ENCODE measurements at regions of chr16 and their contacts with region 1.

Region 1: GRCh38 chr16:68093816-68094613 is 8.8 kb downstream of the NFATC3 start:
- DNase-seq: no peak
- ATAC-seq: peak; percentile 67
- H3K4me3 ChIP-seq: no peak overlapping the region
- H3K27ac ChIP-seq: no peak overlapping the region
- H3K4me1 ChIP-seq: peaks cover 92% of the 10 kb centered on the region
- H3K27me3 ChIP-seq: no peaks in the 10 kb centered on the region
- CTCF ChIP-seq: peak; percentile 76
- EP300 ChIP-seq: no peak
- POLR2A ChIP-seq: no peak
- RAD21 ChIP-seq: peak; percentile 51

Region 2: DNA sequence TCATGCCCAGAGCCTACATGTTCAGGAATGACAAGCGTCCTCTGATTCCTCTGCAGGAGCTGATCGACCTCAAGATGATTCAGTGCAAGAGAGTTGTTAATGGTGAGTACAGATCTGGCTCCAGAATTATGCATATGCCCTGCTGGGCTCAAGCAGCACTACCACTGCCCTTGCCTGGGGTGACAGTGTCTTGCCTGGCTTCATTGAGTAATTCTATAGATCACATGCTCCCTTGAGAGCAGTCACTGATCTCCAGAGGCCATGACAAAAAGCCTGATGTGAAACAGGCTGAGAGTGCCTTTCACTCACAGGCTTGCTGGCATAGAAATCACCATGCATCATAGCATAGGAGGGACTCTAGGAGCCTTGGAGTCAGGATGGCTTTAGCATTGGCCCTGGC is 44.6 kb before region 1 on chr16:
- CTCF ChIA-PET with region 1: no interaction called
- POLR2A ChIA-PET with region 1: no interaction called
- in situ Hi-C with region 1: no loop called
- intact Hi-C with region 1: no loop called
- DNase-seq: no peak
- ATAC-seq: no peak
- H3K4me3 ChIP-seq: no peak overlapping the region
- H3K27ac ChIP-seq: no peak overlapping the region
- H3K4me1 ChIP-seq: peaks cover 21% of the 10 kb centered on the region
- H3K27me3 ChIP-seq: no peaks in the 10 kb centered on the region
- CTCF ChIP-seq: no peak
- EP300 ChIP-seq: no peak
- POLR2A ChIP-seq: no peak
- RAD21 ChIP-seq: no peak

Region 3: GRCh38 chr16:68105611-68106010 is 11.6 kb after region 1 on chr16:
- CTCF ChIA-PET with region 1: no interaction called
- POLR2A ChIA-PET with region 1: no interaction called
- in situ Hi-C with region 1: no loop called
- intact Hi-C with region 1: no loop called
- DNase-seq: no peak
- ATAC-seq: no peak
- H3K4me3 ChIP-seq: no peak overlapping the region
- H3K27ac ChIP-seq: no peak overlapping the region
- H3K4me1 ChIP-seq: peaks cover 69% of the 10 kb centered on the region
- H3K27me3 ChIP-seq: no peaks in the 10 kb centered on the region
- CTCF ChIP-seq: no peak
- EP300 ChIP-seq: no peak
- POLR2A ChIP-seq: no peak
- RAD21 ChIP-seq: no peak

Region 4: GRCh38 chr16:68116256-68116867 is 22.3 kb after region 1 on chr16:
- CTCF ChIA-PET with region 1: interaction called, 12 read pairs
- POLR2A ChIA-PET with region 1: interaction called, 5 read pairs
- in situ Hi-C with region 1: no loop called
- intact Hi-C with region 1: no loop called
- DNase-seq: no peak
- ATAC-seq: no peak
- H3K4me3 ChIP-seq: no peak overlapping the region
- H3K27ac ChIP-seq: no peak overlapping the region
- H3K4me1 ChIP-seq: peaks cover 71% of the 10 kb centered on the region
- H3K27me3 ChIP-seq: no peaks in the 10 kb centered on the region
- CTCF ChIP-seq: peak; percentile 25; the same call in 1 of the 2 replicates
- EP300 ChIP-seq: no peak
- POLR2A ChIP-seq: no peak
- RAD21 ChIP-seq: no peak

Region 5: DNA sequence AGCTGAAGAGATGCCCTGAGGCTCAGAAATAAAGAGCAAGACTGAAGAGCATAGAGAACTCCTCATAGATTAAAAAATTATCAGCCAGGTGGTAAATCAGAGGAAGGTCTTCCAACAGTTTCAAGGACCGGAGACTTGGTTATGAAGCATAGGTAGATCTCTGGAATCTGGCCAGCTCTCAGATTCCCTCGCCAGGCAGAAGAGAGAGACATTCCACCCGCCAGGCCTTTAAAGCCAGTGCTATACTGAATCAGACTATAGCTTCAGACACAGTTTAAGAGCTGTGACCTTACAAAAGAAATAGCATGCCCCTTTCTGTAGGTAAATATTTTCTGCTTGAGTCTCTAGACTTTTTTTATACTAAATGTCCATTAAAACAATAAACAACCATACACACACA is 61.4 kb after region 1 on chr16:
- CTCF ChIA-PET with region 1: no interaction called
- POLR2A ChIA-PET with region 1: no interaction called
- in situ Hi-C with region 1: no loop called
- intact Hi-C with region 1: loop called (anchors 10 kb)
- DNase-seq: peak; percentile 12
- ATAC-seq: peak; percentile 45
- H3K4me3 ChIP-seq: no peak overlapping the region
- H3K27ac ChIP-seq: no peak overlapping the region
- H3K4me1 ChIP-seq: no peaks in the 10 kb centered on the region
- H3K27me3 ChIP-seq: no peaks in the 10 kb centered on the region
- CTCF ChIP-seq: no peak
- EP300 ChIP-seq: no peak
- POLR2A ChIP-seq: no peak
- RAD21 ChIP-seq: no peak

Region 6: DNA sequence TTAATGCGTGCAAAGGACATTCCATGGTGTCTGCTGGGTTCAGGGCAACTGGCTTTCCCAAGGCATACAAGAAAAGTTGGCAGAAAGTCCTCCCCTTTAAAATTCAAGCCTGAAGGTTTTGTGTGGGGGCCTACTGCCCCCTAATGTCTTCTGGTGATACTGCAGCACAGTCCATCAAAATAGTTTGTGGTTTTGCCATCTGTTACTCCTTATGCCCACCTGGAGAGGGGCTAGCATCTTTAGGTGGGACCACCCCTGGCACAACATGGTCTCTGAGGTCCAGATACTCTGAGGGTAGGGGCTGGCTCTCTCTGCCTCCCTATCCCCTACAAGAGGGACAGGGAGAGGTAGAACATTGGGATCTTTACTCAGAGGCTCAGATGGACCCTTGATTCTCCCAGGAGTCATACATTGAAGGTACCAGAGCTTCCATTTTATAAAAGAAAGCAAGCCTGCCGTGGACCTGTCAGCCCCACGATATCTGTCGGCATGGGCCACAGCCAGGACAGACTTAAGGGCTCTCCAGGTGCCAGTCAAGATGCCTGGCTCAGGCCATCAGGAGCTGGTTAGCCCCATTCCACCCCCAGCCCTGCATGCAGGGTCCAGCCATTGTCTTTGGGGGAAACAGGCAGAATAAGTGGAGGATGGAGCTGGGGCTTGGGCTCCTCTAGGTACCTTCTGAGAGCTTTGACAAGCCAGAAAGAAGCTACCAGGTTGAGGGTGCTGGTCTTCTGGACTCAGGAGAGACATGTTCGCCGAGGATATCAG is 135.6 kb after region 1 on chr16:
- CTCF ChIA-PET with region 1: interaction called, 3 read pairs
- POLR2A ChIA-PET with region 1: interaction called, 6 read pairs
- in situ Hi-C with region 1: loop called (anchors 10 kb)
- intact Hi-C with region 1: loop called (anchors 1 kb)
- DNase-seq: peak; percentile 64
- ATAC-seq: peak; percentile 1; the same call in 1 of the 3 replicates
- H3K4me3 ChIP-seq: no peak overlapping the region
- H3K27ac ChIP-seq: no peak overlapping the region
- H3K4me1 ChIP-seq: peaks cover 38% of the 10 kb centered on the region
- H3K27me3 ChIP-seq: no peaks in the 10 kb centered on the region
- CTCF ChIP-seq: peak; percentile 80
- EP300 ChIP-seq: no peak
- POLR2A ChIP-seq: no peak; a peak in 1 of 4 replicates
- RAD21 ChIP-seq: peak; percentile 75